ENCODE measurements at regions of chr15 and their contacts with region 1.

Region 1: GRCh38 chr15:96838081-96838480 is 507.6 kb downstream of the NR2F2 start:
- H3K4me3 ChIP-seq: no peak overlapping the region
- H3K27ac ChIP-seq: no peak overlapping the region
- H3K4me1 ChIP-seq: no peaks in the 10 kb centered on the region
- CTCF ChIP-seq: no peak

Region 2: DNA sequence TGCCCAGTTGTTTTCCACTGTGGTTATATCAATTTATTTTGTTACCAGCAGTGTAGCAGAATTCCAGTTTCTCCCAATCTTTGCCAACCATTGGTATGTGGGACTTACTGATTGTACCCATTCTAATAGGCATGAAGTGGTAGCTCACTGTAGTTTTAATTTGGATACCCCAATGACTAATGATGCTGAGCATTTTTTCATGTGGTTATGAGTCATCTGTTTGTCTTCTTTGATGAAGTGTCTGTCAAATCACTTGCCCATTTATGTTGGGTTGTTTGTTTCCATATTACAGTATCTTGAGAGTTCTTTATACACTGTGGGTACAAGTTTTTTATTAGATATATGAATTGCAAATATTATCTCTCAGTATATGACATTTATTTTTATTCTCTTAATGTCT is 136.7 kb after region 1 on chr15:
- CTCF ChIA-PET with region 1: interaction called, 10 read pairs
- POLR2A ChIA-PET with region 1: no interaction called
- H3K4me3 ChIP-seq: no peak overlapping the region
- H3K27ac ChIP-seq: no peak overlapping the region
- H3K4me1 ChIP-seq: no peaks in the 10 kb centered on the region
- CTCF ChIP-seq: no peak

Measured in HEK293 (cell line).